GM13977 (cell line): ENCODE measurements at regions of chr11 and their contacts with region 1.

Region 1: GRCh38 chr11:117099696-117100095 is 1.5 kb upstream of the SIK3 start:
- DNase-seq: no peak
- CTCF ChIP-seq: no peak

Region 2: GRCh38 chr11:116879800-116880625 is 219.7 kb before region 1 on chr11:
- in situ Hi-C with region 1: loop called (anchors 5 kb)
- DNase-seq: peak; percentile 61
- CTCF ChIP-seq: peak; percentile 61